Left cardiac atrium (tissue), 4 donors: ENCODE measurements at regions of chr7 and their contacts with region 1.

Region 1: DNA sequence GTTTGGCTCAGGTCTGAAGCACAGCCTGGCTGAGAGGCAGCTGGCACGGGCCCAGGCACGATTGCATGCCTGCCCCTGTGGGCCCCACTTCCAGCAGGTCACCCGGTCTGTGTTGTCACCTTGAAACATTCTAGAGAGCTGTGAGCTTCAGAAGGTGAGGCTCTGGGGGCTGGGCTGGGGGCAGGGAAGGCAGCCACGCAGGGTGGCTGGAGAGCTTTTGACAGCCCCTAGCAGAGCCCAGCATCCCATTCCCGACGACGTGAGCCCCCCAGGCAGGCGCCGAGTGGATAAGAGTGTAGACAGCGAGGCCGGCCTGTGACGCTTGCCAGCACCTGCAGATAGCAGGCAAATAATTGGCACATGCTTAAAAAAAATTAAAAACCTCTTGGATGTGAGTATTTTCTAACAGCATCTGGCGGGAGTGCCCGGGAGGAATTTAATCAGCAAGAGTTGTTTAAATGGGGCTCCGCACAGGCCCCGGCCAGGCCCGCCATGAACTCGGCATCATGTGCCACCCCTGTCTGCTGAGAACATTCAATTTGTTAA is 212.0 kb upstream of the TBX20 start:
- DNase-seq: peak; percentile 77
- ATAC-seq: peak; percentile 85 to 89

Region 2: GRCh38 chr7:34982371-34983019 is 483.4 kb before region 1 on chr7:
- intact Hi-C with region 1: no loop called
- DNase-seq: no peak
- ATAC-seq: no peak

Region 3: GRCh38 chr7:35015331-35015859 is 450.5 kb before region 1 on chr7:
- intact Hi-C with region 1: no loop called
- DNase-seq: no peak
- ATAC-seq: no peak

Region 4: GRCh38 chr7:35513828-35514227 is 48.0 kb after region 1 on chr7:
- intact Hi-C with region 1: loop called in 1 of 2 experiments (anchors 5 kb)
- DNase-seq: no peak
- ATAC-seq: peak in 1 of 2 donors; percentile 75